Heart right ventricle (tissue), 16 donors: ENCODE measurements at regions of chr17 and their contacts with region 1.

Region 1: GRCh38 chr17:66906321-66907278 is 57.9 kb upstream of the CACNG4 start:
- DNase-seq: peak; percentile 69 to 78
- ATAC-seq: peak in 4 of 8 donors; percentile 43 to 57 (median 54)
- H3K4me3 ChIP-seq: no peak overlapping the region
- H3K27ac ChIP-seq: no peak overlapping the region
- H3K4me1 ChIP-seq: peaks cover 0 to 11% (median 9%) of the 10 kb centered on the region in 9 donors
- H3K27me3 ChIP-seq: peaks cover 0 to 16% (median 0%) of the 10 kb centered on the region in 7 donors
- CTCF ChIP-seq: peak; percentile 75 to 92 (median 87)

Region 2: GRCh38 chr17:66191593-66192382 is 714.8 kb before region 1 on chr17 and contains the start of gene CEP112:
- intact Hi-C with region 1: loop called in 1 of 10 experiments (anchors 10 kb)
- DNase-seq: peak; percentile 75 to 84
- ATAC-seq: peak; percentile 88 to 96 (median 92)
- H3K4me3 ChIP-seq: peak within 1 kb of the TSS; percentile 12 to 94 (median 83)
- H3K27ac ChIP-seq: peak within 1 kb of the TSS; percentile 69 to 91 (median 81)
- H3K4me1 ChIP-seq: peaks cover 0 to 39% (median 21%) of the 10 kb centered on the region in 9 donors
- H3K27me3 ChIP-seq: no peaks in the 10 kb centered on the region
- CTCF ChIP-seq: peak in 3 of 9 donors; percentile 20 to 38 (median 29)
- total RNA-seq, gene CEP112: 14.6 to 28.5 (median 16.3) TPM

Region 3: DNA sequence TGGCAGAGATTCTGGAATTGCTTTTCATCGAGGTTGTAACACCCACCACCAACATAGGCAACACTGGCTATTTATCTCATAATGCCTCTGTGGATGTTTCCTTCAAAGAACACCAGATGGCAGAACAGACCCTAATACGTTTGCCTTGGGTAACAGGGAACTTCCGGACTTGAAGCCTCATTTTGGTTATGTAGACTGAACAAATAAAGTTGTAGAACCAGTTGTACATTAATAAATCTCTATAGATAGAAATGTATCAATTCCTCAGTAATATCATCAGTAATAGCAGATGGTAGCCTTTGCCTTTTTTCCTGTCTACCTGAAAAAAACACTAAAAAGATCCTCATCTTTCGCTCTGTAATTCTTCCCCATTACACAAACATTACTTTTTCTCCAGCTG is 651.5 kb before region 1 on chr17:
- intact Hi-C with region 1: loop called in 1 of 10 experiments (anchors 10 kb)
- DNase-seq: peak in 1 of 2 donors; percentile 36
- ATAC-seq: peak in 7 of 8 donors; percentile 58 to 82 (median 68)
- H3K4me3 ChIP-seq: no peak overlapping the region
- H3K27ac ChIP-seq: no peak overlapping the region
- H3K4me1 ChIP-seq: peaks cover 0 to 3% (median 0%) of the 10 kb centered on the region in 9 donors
- H3K27me3 ChIP-seq: no peaks in the 10 kb centered on the region
- CTCF ChIP-seq: peak; percentile 32 to 83 (median 70)

Region 4: GRCh38 chr17:66673668-66674315 is 232.8 kb before region 1 on chr17:
- intact Hi-C with region 1: no loop called
- DNase-seq: peak in 1 of 2 donors; percentile 46
- ATAC-seq: peak; percentile 55 to 80 (median 69)
- H3K4me3 ChIP-seq: no peak overlapping the region
- H3K27ac ChIP-seq: peak overlapping the region in 1 of 10 donors; percentile 10
- H3K4me1 ChIP-seq: peaks cover 0 to 7% (median 0%) of the 10 kb centered on the region in 9 donors
- H3K27me3 ChIP-seq: no peaks in the 10 kb centered on the region
- CTCF ChIP-seq: peak; percentile 36 to 81 (median 66)

Region 5: DNA sequence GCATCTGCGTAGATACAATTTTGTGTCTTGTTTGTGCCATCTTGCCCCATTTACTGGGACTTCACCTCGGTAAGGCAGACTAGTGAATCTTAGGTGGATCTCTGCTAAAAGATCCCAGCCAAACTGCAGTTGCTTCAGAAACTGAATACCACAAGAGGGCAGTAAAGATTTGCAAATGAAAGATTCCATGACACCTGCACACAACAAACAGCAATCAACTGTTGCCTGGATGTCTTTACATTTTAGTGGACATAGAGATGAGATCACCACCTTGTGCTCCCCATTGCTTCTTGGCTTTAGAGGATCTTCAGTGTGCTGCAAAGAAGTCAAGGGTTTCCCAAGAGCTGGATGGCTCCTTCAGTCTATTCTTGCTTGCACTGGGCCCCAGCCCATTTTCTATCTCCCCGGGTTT is 190.8 kb before region 1 on chr17:
- intact Hi-C with region 1: loop called in 7 of 10 experiments (anchors 1 to 5 kb)
- DNase-seq: no peak
- ATAC-seq: peak in 6 of 8 donors; percentile 28 to 67 (median 54)
- H3K4me3 ChIP-seq: no peak overlapping the region
- H3K27ac ChIP-seq: no peak overlapping the region
- H3K4me1 ChIP-seq: peaks cover 0 to 29% (median 4%) of the 10 kb centered on the region in 9 donors
- H3K27me3 ChIP-seq: no peaks in the 10 kb centered on the region
- CTCF ChIP-seq: peak; percentile 34 to 80 (median 71)

Region 6: GRCh38 chr17:66727639-66728570 is 178.7 kb before region 1 on chr17:
- intact Hi-C with region 1: loop called in 5 of 10 experiments (anchors 1 to 5 kb)
- DNase-seq: peak; percentile 40 to 46
- ATAC-seq: peak; percentile 50 to 78 (median 70)
- H3K4me3 ChIP-seq: no peak overlapping the region
- H3K27ac ChIP-seq: no peak overlapping the region
- H3K4me1 ChIP-seq: peaks cover 3 to 21% (median 11%) of the 10 kb centered on the region in 9 donors
- H3K27me3 ChIP-seq: no peaks in the 10 kb centered on the region
- CTCF ChIP-seq: peak; percentile 8 to 65 (median 55)

Region 7: DNA sequence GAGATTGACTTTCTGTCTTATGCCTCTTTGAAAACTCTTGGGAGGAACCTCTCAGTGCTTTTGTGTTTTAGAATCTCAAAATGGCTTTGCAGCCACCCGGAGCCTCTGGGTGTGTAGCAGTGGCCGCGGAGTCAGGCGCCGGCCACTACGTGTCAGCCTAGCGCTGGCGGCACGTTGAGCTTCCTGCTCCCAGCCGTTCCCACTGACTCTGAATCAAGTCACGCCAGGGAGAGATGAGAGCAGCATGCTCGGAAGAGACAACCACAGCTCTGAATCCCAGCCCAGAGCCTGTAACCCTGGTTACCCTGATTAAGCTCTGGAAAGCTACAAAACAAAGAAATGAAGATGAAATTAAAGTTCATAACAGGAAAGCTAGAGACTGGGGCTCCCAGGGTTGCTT is 169.1 kb before region 1 on chr17:
- intact Hi-C with region 1: loop called in 1 of 10 experiments (anchors 5 kb)
- DNase-seq: peak; percentile 40 to 46
- ATAC-seq: peak; percentile 85 to 97 (median 93)
- H3K4me3 ChIP-seq: no peak overlapping the region
- H3K27ac ChIP-seq: no peak overlapping the region
- H3K4me1 ChIP-seq: peaks cover 0 to 10% (median 0%) of the 10 kb centered on the region in 9 donors
- H3K27me3 ChIP-seq: no peaks in the 10 kb centered on the region
- CTCF ChIP-seq: peak in 6 of 9 donors; percentile 34 to 56 (median 42)